ENCODE measurements at regions of chr2 and their contacts with region 1.

Region 1: GRCh38 chr2:237943395-237944094 is 23.3 kb upstream of the UBE2F start:
- DNase-seq: no peak
- H3K4me3 Mint-ChIP-seq: no peak overlapping the region
- H3K27ac Mint-ChIP-seq: peak overlapping the region; percentile 97
- H3K4me1 Mint-ChIP-seq: peaks cover 74% of the 10 kb centered on the region
- H3K27me3 Mint-ChIP-seq: peaks cover 2% of the 10 kb centered on the region

Region 2: DNA sequence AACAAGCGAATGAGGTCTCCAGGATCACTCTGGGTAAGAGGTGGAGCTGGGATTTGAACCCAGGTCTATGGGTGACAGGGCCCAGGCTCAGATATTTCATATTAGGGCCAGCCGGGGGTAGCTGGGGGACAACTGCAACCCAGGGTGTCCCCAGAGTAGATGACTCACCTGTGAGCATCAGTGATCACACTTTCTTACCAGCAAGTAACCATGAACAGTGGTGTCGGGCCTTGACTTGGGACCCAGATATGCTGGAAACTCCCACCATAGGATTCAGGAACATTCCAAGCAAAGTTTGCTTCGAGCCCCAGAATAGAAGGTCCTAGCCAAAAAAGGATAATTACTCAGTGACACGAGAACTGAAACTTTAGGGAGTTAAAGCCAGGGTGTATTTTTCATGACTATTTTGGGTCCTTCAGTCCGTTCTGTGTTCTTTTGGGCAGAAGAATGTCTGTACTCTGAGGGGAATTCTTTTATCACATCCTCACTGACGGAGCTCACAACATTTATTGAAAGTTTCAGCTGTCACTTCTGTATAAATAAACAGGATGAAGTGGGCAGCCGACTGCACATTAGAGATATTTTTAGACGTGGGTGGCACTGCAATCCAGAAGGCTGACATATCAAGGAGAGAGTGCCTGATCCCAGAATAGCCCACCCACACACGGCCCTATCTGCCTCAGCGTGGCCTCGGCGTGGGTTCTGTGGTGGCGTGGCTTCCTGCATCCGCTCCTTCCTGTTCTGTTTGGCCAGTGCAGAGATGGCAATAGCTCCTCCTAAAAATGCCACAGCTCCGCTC is 38.5 kb before region 1 on chr2:
- CTCF ChIA-PET with region 1: no interaction called
- POLR2A ChIA-PET with region 1: interaction called, 10 read pairs
- DNase-seq: peak; percentile 36
- H3K4me3 Mint-ChIP-seq: peak overlapping the region; percentile 37
- H3K27ac Mint-ChIP-seq: peak overlapping the region; percentile 80
- H3K4me1 Mint-ChIP-seq: peaks cover 55% of the 10 kb centered on the region
- H3K27me3 Mint-ChIP-seq: no peaks in the 10 kb centered on the region

Region 3: GRCh38 chr2:237931205-237931721 is 12.3 kb before region 1 on chr2:
- CTCF ChIA-PET with region 1: interaction called, 3 read pairs
- POLR2A ChIA-PET with region 1: interaction called, 14 read pairs
- DNase-seq: no peak
- H3K4me3 Mint-ChIP-seq: no peak overlapping the region
- H3K27ac Mint-ChIP-seq: no peak overlapping the region
- H3K4me1 Mint-ChIP-seq: peaks cover 16% of the 10 kb centered on the region
- H3K27me3 Mint-ChIP-seq: no peaks in the 10 kb centered on the region

Region 4: GRCh38 chr2:237966565-237967462 is 23.3 kb after region 1 on chr2 and contains the start of gene UBE2F:
- CTCF ChIA-PET with region 1: interaction called, 6 read pairs
- POLR2A ChIA-PET with region 1: interaction called, 16 read pairs
- DNase-seq: peak; percentile 97
- H3K4me3 Mint-ChIP-seq: peak within 1 kb of the TSS; percentile 76
- H3K27ac Mint-ChIP-seq: peak within 1 kb of the TSS; percentile 66
- H3K4me1 Mint-ChIP-seq: peaks cover 39% of the 10 kb centered on the region
- H3K27me3 Mint-ChIP-seq: peaks cover 2% of the 10 kb centered on the region
- total RNA-seq, gene UBE2F: 77.5 to 82.7 TPM

Measured in activated CD4-positive, alpha-beta memory T cell treated with anti-CD3 and anti-CD28 coated beads, Interleukin-2, amount 10 ng/mL, durations not matched to agents 7 days and 5 days (primary cell).